Heart left ventricle (tissue), 16 donors: ENCODE measurements at regions of chr1 and their contacts with region 1.

Region 1: DNA sequence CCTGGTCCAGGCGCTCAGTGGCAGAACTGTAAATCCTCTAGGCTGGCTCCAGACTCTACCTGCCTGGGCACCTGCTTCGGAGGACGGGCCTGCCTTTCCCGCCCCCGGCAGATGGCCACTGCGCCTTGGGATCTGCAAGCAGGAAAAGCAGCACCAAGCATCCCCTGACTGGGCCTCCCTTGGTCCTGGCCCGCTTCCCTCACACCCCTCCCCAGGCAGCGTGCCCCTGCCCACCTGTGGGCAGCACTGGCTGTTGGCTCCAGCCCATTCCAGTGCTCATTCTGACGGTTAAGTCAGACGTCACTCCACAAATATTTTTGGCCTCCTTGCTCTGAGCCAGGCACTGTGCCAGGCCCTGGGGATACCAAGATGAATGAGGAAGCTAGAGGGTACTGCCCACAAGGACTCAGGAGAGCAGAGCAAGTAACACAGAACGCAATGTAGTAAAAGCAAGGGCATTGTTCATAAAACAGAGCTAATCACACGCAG is 22.0 kb upstream of the BLACAT1 start:
- DNase-seq: peak in 4 of 5 donors; percentile 42 to 72 (median 56)
- ATAC-seq: peak in 3 of 4 donors; percentile 62 to 77 (median 75)
- H3K4me3 ChIP-seq: no peak overlapping the region
- H3K27ac ChIP-seq: no peak overlapping the region
- H3K4me1 ChIP-seq: peaks cover 0 to 10% (median 0%) of the 10 kb centered on the region in 12 donors
- H3K27me3 ChIP-seq: peaks cover 0 to 54% (median 16%) of the 10 kb centered on the region in 9 donors
- CTCF ChIP-seq: no peak
- POLR2A ChIP-seq: no peak

Region 2: GRCh38 chr1:205354259-205354904 is 123.4 kb before region 1 on chr1:
- intact Hi-C with region 1: loop called in 3 of 10 experiments (anchors 5 to 10 kb)
- DNase-seq: peak in 3 of 5 donors; percentile 45 to 59 (median 54)
- ATAC-seq: peak in 2 of 4 donors; percentile 52 to 67
- H3K4me3 ChIP-seq: no peak overlapping the region
- H3K27ac ChIP-seq: no peak overlapping the region
- H3K4me1 ChIP-seq: peaks cover 0 to 15% (median 0%) of the 10 kb centered on the region in 12 donors
- H3K27me3 ChIP-seq: peaks cover 0 to 16% (median 8%) of the 10 kb centered on the region in 9 donors
- CTCF ChIP-seq: peak; percentile 70 to 92 (median 82)
- POLR2A ChIP-seq: no peak

Region 3: GRCh38 chr1:205438213-205439157 is 39.3 kb before region 1 on chr1:
- intact Hi-C with region 1: loop called in 6 of 10 experiments (anchors 5 to 10 kb)
- DNase-seq: peak; percentile 87 to 90 (median 87)
- ATAC-seq: peak; percentile 72 to 91 (median 84)
- H3K4me3 ChIP-seq: peak overlapping the region in 2 of 12 donors; percentile 6 to 11
- H3K27ac ChIP-seq: peak overlapping the region in 9 of 12 donors; percentile 34 to 72 (median 55)
- H3K4me1 ChIP-seq: peaks cover 7 to 53% (median 42%) of the 10 kb centered on the region in 12 donors
- H3K27me3 ChIP-seq: no peaks in the 10 kb centered on the region
- CTCF ChIP-seq: peak; percentile 46 to 84 (median 69)
- POLR2A ChIP-seq: no peak

Region 4: GRCh38 chr1:205458777-205459566 is 18.8 kb before region 1 on chr1:
- intact Hi-C with region 1: loop called in 1 of 10 experiments (anchors 2 kb)
- DNase-seq: peak in 2 of 5 donors; percentile 32 to 55
- ATAC-seq: peak; percentile 55 to 75 (median 68)
- H3K4me3 ChIP-seq: no peak overlapping the region
- H3K27ac ChIP-seq: no peak overlapping the region
- H3K4me1 ChIP-seq: peaks cover 3 to 20% (median 12%) of the 10 kb centered on the region in 12 donors
- H3K27me3 ChIP-seq: peaks cover 32 to 87% (median 48%) of the 10 kb centered on the region in 9 donors
- CTCF ChIP-seq: no peak
- POLR2A ChIP-seq: no peak